Activated CD4-positive, alpha-beta T cell treated with anti-CD3 and anti-CD28 coated beads, Interleukin-2, amount 10 ng/mL, durations not matched to agents 24 days and 14 days (primary cell): ENCODE measurements at regions of chr19 and their contacts with region 1.

Region 1: GRCh38 chr19:9914315-9915207 is 21.8 kb downstream of the OLFM2 start:
- DNase-seq: peak; percentile 94
- H3K4me3 Mint-ChIP-seq: peak overlapping the region; percentile 69
- H3K27ac Mint-ChIP-seq: peak overlapping the region; percentile 27
- H3K4me1 Mint-ChIP-seq: peaks cover 6% of the 10 kb centered on the region
- H3K27me3 Mint-ChIP-seq: peaks cover 23% of the 10 kb centered on the region

Region 2: DNA sequence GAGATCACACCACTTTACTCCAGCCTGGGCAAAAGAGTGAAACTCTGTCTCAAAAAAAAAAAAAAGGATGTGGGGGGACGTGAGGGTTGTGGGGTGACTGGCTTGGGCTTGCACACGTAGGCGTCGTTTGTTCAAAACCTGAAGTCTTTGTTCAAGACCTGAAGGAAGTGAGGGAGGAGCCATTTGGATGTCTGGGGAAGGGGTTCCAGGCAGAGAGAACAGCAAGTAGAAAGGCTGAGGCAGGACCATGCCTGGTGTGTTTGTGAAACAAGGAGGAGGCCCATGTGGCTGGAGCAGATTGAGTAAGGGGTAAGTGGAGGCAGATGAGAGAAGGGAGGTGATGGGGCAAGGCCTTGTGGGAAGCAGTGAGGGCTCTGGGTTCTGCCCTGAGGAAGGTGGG is 51.6 kb before region 1 on chr19:
- intact Hi-C with region 1: loop called (anchors 1 kb)
- DNase-seq: peak; percentile 81
- H3K4me3 Mint-ChIP-seq: peak overlapping the region; percentile 84
- H3K27ac Mint-ChIP-seq: peak overlapping the region; percentile 89
- H3K4me1 Mint-ChIP-seq: peaks cover 68% of the 10 kb centered on the region
- H3K27me3 Mint-ChIP-seq: no peaks in the 10 kb centered on the region